ENCODE measurements at regions of chr1 and their contacts with region 1.

Region 1: GRCh38 chr1:239288820-239289554 is 97.4 kb upstream of the CHRM3 start:
- DNase-seq: no peak
- H3K4me3 ChIP-seq: no peak overlapping the region
- CTCF ChIP-seq: no peak
- POLR2A ChIP-seq: no peak

Region 2: GRCh38 chr1:238681021-238681420 is 608.0 kb before region 1 on chr1:
- intact Hi-C with region 1: no loop called
- DNase-seq: no peak
- H3K4me3 ChIP-seq: no peak overlapping the region
- CTCF ChIP-seq: no peak
- POLR2A ChIP-seq: no peak

Region 3: DNA sequence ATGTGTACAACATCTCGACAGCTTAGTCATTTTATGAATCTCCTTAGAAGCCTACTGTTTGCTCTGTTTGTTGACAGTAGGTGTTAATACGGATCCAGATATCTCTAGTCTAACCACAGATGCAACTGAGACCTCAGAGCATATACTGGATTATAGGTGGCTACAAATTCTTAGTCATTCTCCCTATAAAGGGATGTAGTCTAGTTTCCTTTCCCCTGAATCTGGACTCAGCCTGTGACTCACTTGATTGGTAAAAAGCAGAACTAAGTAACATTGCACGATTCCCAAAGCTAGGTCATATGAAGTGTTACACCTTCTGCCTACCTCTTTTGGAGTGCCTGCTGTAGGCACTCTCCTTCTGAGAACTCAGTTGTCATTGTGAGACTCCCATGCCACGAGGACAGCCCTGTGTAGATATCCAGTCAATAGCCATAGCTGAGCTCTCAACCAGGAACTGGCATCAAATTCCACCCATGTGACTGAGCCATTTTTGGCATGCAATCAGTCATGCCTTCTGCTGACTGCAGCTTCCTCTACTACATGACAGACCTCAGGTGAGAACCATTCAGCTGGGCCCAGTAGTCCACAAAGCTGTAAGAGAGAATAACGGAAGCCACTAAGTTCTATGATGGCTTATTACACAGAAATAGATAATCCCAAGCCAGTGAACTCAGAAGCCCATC is 38.5 kb before region 1 on chr1:
- intact Hi-C with region 1: no loop called
- DNase-seq: no peak
- H3K4me3 ChIP-seq: no peak overlapping the region
- CTCF ChIP-seq: no peak
- POLR2A ChIP-seq: no peak

Region 4: GRCh38 chr1:239550178-239550577 is 261.2 kb after region 1 on chr1:
- intact Hi-C with region 1: loop called (anchors 5 kb)
- DNase-seq: no peak
- H3K4me3 ChIP-seq: no peak overlapping the region
- CTCF ChIP-seq: no peak
- POLR2A ChIP-seq: no peak